ENCODE measurements at regions of chr12 and their contacts with region 1.

Region 1: GRCh38 chr12:11581179-11581755 is 68.2 kb upstream of the ETV6 start:
- H3K4me3 Mint-ChIP-seq: no peak overlapping the region
- H3K27ac Mint-ChIP-seq: peak overlapping the region; percentile 82
- H3K4me1 Mint-ChIP-seq: peaks cover 67% of the 10 kb centered on the region
- H3K27me3 Mint-ChIP-seq: no peaks in the 10 kb centered on the region

Region 2: GRCh38 chr12:11633968-11634367 is 52.7 kb after region 1 on chr12:
- intact Hi-C with region 1: no loop called
- H3K4me3 Mint-ChIP-seq: no peak overlapping the region
- H3K27ac Mint-ChIP-seq: no peak overlapping the region
- H3K4me1 Mint-ChIP-seq: peaks cover 7% of the 10 kb centered on the region
- H3K27me3 Mint-ChIP-seq: no peaks in the 10 kb centered on the region

Region 3: GRCh38 chr12:11746024-11746771 is 164.9 kb after region 1 on chr12:
- intact Hi-C with region 1: loop called (anchors 5 kb)
- H3K4me3 Mint-ChIP-seq: peak overlapping the region; percentile 44
- H3K27ac Mint-ChIP-seq: peak overlapping the region; percentile 94
- H3K4me1 Mint-ChIP-seq: peaks cover 81% of the 10 kb centered on the region
- H3K27me3 Mint-ChIP-seq: no peaks in the 10 kb centered on the region

Region 4: DNA sequence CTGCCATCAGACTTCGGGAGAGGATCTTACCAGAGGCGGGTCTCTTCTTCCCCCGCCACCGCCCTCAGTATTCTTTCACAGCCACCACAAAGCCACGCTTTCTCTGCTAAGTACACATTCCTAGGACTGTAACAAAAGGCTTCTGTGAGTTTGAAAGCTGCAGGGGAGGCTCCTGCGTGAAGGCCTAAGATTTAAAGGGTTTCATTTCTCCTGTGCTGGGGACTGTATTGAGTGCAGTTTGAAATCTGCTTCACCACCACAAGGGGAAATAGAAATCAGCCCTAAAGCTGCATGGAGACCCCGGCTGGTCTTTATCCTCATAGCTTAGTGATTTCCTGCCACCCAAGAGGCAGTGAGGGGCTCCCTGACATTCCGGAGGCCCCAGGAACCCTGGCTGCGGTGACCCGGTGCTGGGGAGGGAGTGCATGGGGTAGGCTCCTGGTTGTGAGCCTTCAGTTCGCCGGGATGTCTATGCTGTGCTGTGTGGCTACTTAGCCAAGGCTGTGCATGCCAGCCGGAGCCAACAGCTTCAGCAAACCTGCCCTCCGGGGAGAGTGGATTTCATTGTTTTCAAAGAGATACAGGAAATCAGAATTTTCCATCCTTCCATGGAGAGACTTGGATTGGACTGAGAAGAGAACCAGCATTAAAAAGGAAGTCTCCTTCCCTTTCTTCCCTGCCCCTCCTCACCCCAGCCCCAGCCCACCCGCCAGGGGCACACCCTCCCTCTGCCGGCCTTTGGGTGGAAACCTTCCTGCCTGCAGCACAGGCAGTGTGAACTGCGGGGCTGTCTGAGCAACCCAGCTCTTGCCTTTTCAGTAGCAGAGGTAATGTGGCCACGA is 231.5 kb after region 1 on chr12:
- intact Hi-C with region 1: loop called (anchors 5 kb)
- H3K4me3 Mint-ChIP-seq: peak overlapping the region; percentile 73
- H3K27ac Mint-ChIP-seq: peak overlapping the region; percentile 88
- H3K4me1 Mint-ChIP-seq: peaks cover 81% of the 10 kb centered on the region
- H3K27me3 Mint-ChIP-seq: no peaks in the 10 kb centered on the region

Region 5: DNA sequence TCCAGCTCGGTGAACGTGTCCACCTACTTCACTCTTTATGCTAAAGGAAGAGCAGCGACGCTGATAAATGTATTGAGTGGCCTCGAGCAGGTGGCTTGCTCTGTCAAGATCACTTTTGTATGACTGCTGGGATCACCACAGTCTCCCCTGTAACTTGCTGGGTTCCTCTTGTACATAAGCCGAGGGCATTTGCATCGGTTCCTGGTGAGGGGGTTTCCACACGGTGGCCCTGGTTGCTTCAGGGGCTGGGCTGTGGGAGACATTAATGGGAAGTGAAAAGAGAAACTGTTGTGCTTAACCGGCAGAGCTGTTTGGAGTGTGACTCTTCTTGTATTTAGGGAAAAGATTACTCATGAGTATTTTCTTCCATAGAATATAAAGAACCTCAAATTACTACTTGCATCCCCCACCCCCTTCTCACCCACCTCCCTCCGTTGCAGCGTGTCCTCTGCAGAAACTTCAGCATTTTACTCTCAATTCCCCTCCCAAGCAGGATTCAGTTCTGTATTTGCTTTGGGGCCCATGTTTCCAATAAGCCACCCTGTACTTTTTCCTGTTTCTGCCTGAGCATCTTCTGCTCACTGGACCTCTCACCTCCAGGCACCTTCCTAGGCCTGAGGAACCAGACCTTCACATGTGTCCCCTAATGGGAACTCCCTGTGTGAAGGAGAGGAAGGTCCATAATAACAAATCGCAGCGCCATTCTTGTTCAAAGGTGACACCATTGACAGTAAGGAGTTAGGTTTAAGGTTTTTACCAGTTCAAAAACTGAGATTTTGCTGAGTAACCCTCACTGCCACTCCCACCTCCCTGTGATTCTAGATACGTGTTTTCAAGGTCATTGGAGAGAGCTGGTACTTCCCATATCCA is 255.2 kb after region 1 on chr12:
- intact Hi-C with region 1: loop called (anchors 5 kb)
- H3K4me3 Mint-ChIP-seq: peak overlapping the region; percentile 42
- H3K27ac Mint-ChIP-seq: peak overlapping the region; percentile 99
- H3K4me1 Mint-ChIP-seq: peaks cover 90% of the 10 kb centered on the region
- H3K27me3 Mint-ChIP-seq: no peaks in the 10 kb centered on the region

Region 6: GRCh38 chr12:12032851-12033588 is 451.8 kb after region 1 on chr12:
- intact Hi-C with region 1: loop called (anchors 1 kb)
- H3K4me3 Mint-ChIP-seq: peak overlapping the region; percentile 66
- H3K27ac Mint-ChIP-seq: peak overlapping the region; percentile 84
- H3K4me1 Mint-ChIP-seq: peaks cover 52% of the 10 kb centered on the region
- H3K27me3 Mint-ChIP-seq: no peaks in the 10 kb centered on the region

Measured in dendritic cell treated with granulocyte-macrophage colony-stimulating factor and Interleukin-4, amounts not matched to agents 40 ng/mL and 50 ng/mL, for 4 days (primary cell).